Activated T-helper 1 cell treated with anti-CD3 and anti-CD28 coated beads, Interleukin-12 subunit alpha, Interleukin-12 subunit beta, Interleukin-2, Interleukin-4 antibody, amounts not matched to agents 30 ng/mL and 10 ng/mL and 1 ng/mL, durations not matched to agents 14 hours and 24 hours and 36 hours (primary cell): ENCODE measurements at regions of chr14 and their contacts with region 1.

Region 1: DNA sequence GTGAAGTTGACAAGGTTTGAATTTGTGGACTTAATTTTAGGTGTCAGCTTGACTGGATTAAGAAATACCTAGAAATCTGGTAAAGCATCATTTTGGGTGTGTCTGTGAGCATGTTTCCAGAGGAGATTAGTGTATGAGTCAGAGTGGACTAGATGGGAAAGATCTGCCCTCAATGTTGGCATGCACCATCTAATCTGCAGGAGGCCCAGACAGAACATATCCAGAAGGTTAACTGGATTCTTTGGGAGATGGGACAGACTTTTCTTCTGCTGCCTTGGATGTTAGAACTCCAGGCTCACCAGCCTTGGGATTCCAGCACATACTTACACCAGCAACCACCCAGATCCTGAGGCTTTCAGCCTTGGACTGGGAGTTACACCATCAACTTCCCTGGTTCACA is 14.1 kb downstream of the SGPP1 start:
- DNase-seq: no peak
- H3K4me3 Mint-ChIP-seq: no peak overlapping the region
- H3K27ac Mint-ChIP-seq: no peak overlapping the region
- H3K4me1 Mint-ChIP-seq: peaks cover 26% of the 10 kb centered on the region
- H3K27me3 Mint-ChIP-seq: no peaks in the 10 kb centered on the region

Region 2: GRCh38 chr14:63727774-63728728 is 14.3 kb after region 1 on chr14 and contains the start of gene SGPP1:
- intact Hi-C with region 1: loop called (anchors 2 kb)
- DNase-seq: peak; percentile 81
- H3K4me3 Mint-ChIP-seq: peak within 1 kb of the TSS; percentile 99
- H3K27ac Mint-ChIP-seq: peak within 1 kb of the TSS; percentile 99
- H3K4me1 Mint-ChIP-seq: peaks cover 33% of the 10 kb centered on the region
- H3K27me3 Mint-ChIP-seq: peaks cover 16% of the 10 kb centered on the region
- total RNA-seq, gene SGPP1: 14.7 and 14.8 TPM in 2 replicates